Activated CD4-positive, alpha-beta T cell treated with anti-CD3 and anti-CD28 coated beads for 36 hours (primary cell): ENCODE measurements at regions of chr10 and their contacts with region 1.

Region 1: GRCh38 chr10:15209827-15210509 is 41.5 kb upstream of the NMT2 start:
- DNase-seq: peak; percentile 91
- ATAC-seq: peak; percentile 66
- H3K4me3 Mint-ChIP-seq: no peak overlapping the region
- H3K27ac Mint-ChIP-seq: no peak overlapping the region
- H3K4me1 Mint-ChIP-seq: peaks cover 51% of the 10 kb centered on the region
- H3K27me3 Mint-ChIP-seq: no peaks in the 10 kb centered on the region

Region 2: DNA sequence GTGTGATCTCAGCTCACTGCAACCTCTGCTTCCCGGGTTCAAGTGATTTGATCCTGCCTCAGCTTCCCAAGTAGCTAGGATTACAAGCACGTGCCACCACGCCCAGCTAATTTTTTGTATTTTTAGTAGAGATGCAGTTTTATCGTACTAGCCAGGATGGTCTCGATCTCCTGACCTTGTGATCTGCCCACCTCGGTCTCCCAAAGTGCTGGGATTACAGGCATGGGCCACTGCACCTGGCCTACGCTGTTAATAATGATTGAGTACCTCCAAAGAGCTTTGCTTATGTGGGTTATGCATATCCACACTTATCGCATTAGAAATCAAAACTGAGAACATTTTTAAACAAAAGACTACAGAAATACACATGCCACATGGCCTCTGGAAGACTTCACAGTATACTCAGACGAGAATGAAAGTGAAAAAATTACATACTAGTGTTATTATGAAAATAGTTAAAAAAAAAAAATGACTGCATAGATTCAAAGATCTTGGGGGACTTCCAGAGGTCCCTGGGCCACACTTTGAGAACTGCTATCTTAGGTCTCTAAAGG is 87.4 kb before region 1 on chr10:
- CTCF ChIA-PET with region 1: interaction called, 8 read pairs
- POLR2A ChIA-PET with region 1: no interaction called
- intact Hi-C with region 1: loop called in 1 of 2 experiments (anchors 5 kb)
- DNase-seq: peak; percentile 47
- ATAC-seq: peak; percentile 72
- H3K4me3 Mint-ChIP-seq: peak overlapping the region; percentile 40
- H3K27ac Mint-ChIP-seq: peak overlapping the region; percentile 92
- H3K4me1 Mint-ChIP-seq: peaks cover 36% of the 10 kb centered on the region
- H3K27me3 Mint-ChIP-seq: no peaks in the 10 kb centered on the region

Region 3: DNA sequence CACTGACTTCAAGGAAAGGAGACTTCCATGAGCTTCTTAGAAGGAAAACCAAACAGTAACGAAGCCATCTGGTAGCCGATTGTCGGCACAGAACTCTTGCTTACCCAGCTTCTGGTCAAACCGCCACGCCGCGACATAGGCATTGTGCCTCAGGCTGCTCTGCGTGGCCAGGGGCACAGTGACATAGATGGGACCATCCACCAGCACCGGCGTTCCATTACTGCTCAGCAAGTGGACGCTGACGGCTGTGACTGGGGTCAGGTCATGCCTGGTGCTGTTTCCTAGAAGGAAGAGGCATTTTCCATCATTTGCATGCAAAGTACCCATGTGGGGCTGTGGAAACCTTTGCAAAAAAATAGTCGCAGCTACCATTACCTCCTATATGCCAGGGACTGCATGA is 38.6 kb after region 1 on chr10:
- CTCF ChIA-PET with region 1: interaction called, 3 read pairs
- POLR2A ChIA-PET with region 1: no interaction called
- intact Hi-C with region 1: loop called in 1 of 2 experiments (anchors 2 kb)
- DNase-seq: no peak
- ATAC-seq: no peak
- H3K4me3 Mint-ChIP-seq: no peak overlapping the region
- H3K27ac Mint-ChIP-seq: no peak overlapping the region
- H3K4me1 Mint-ChIP-seq: peaks cover 16% of the 10 kb centered on the region
- H3K27me3 Mint-ChIP-seq: no peaks in the 10 kb centered on the region

Region 4: GRCh38 chr10:15300697-15301096 is 90.7 kb after region 1 on chr10:
- CTCF ChIA-PET with region 1: no interaction called
- POLR2A ChIA-PET with region 1: no interaction called
- intact Hi-C with region 1: no loop called
- DNase-seq: no peak
- ATAC-seq: no peak
- H3K4me3 Mint-ChIP-seq: no peak overlapping the region
- H3K27ac Mint-ChIP-seq: no peak overlapping the region
- H3K4me1 Mint-ChIP-seq: no peaks in the 10 kb centered on the region
- H3K27me3 Mint-ChIP-seq: no peaks in the 10 kb centered on the region

Region 5: GRCh38 chr10:15370856-15371701 is 161.1 kb after region 1 on chr10 and contains the start of gene FAM171A1:
- CTCF ChIA-PET with region 1: no interaction called
- POLR2A ChIA-PET with region 1: no interaction called
- intact Hi-C with region 1: loop called (anchors 1 to 2 kb)
- DNase-seq: peak; percentile 85
- ATAC-seq: peak; percentile 82
- H3K4me3 Mint-ChIP-seq: peak within 1 kb of the TSS; percentile 67
- H3K27ac Mint-ChIP-seq: peak within 1 kb of the TSS; percentile 68
- H3K4me1 Mint-ChIP-seq: peaks cover 16% of the 10 kb centered on the region
- H3K27me3 Mint-ChIP-seq: peaks cover 14% of the 10 kb centered on the region
- total RNA-seq, gene FAM171A1: 4.1 to 5.8 TPM

Region 6: GRCh38 chr10:16646181-16647059 is 1436.5 kb after region 1 on chr10:
- CTCF ChIA-PET with region 1: no interaction called
- POLR2A ChIA-PET with region 1: no interaction called
- intact Hi-C with region 1: no loop called
- DNase-seq: peak; percentile 38
- ATAC-seq: peak; percentile 75
- H3K4me3 Mint-ChIP-seq: no peak overlapping the region
- H3K27ac Mint-ChIP-seq: peak overlapping the region; percentile 37
- H3K4me1 Mint-ChIP-seq: peaks cover 14% of the 10 kb centered on the region
- H3K27me3 Mint-ChIP-seq: no peaks in the 10 kb centered on the region